SK-N-SH (cell line): ENCODE measurements at regions of chr7 and their contacts with region 1.

Region 1: GRCh38 chr7:80428161-80429054 is 83.5 kb downstream of the GNAT3 start:
- DNase-seq: peak; percentile 37
- H3K4me3 ChIP-seq: no peak overlapping the region
- H3K27ac ChIP-seq: peak overlapping the region in 1 of 2 experiments; percentile 38; a peak in 1 of 4 replicates
- H3K4me1 ChIP-seq: no peaks in the 10 kb centered on the region
- H3K27me3 ChIP-seq: no peaks in the 10 kb centered on the region
- CTCF ChIP-seq: peak; percentile 85
- EP300 ChIP-seq: no peak
- RAD21 ChIP-seq: peak; percentile 93

Region 2: DNA sequence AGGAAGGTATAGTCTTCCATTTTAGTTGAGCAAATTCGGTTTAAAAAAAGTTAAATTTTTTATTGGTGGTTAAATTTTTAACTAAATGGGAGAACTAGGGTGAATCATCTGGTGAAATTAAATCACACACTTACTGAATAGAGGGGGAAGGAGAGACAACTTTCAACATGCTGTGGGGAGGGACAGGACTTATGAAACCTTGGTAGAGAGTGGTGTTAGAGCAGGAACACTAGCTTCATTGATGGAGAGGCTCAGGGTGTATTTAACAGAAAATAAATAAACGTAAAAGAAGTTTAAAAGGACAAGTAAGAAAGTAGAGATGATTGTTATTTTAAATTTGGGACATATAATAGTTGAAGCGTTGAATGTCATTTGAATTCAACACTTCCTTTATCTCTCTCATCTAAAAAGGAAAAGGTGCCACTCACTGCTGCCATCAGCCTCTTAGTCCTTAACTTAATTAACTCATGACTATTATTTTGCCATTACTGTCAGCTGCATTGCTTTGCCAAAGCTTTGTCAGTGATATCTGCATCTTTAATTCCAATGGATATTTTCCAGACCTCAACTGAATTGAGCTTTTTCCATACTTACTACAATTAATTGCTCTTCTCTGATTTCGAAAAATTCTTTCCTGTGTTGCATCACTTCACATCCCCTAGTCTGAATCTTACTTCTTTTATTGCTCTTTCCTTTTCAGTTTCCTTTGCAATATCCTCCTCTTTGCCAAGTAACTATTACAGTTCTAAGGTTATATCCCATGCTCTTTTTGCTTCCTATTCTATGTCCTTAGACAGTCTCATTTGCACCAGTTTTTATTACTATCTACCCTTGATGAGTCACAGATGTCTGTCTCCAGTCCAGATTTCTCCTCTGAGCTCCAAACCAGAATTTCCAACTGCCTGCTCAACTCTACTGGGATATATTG is 11.8 kb after region 1 on chr7:
- CTCF ChIA-PET with region 1: interaction called, 66 read pairs
- POLR2A ChIA-PET with region 1: no interaction called
- DNase-seq: peak; percentile 59
- H3K4me3 ChIP-seq: no peak overlapping the region; a peak in 1 of 4 replicates
- H3K27ac ChIP-seq: peak overlapping the region; percentile 86 to 96; a peak in 3 of 4 replicates
- H3K4me1 ChIP-seq: peaks cover 21 to 29% of the 10 kb centered on the region in 2 experiments
- H3K27me3 ChIP-seq: no peaks in the 10 kb centered on the region
- CTCF ChIP-seq: no peak
- EP300 ChIP-seq: peak; percentile 96 to 98
- RAD21 ChIP-seq: no peak

Region 3: DNA sequence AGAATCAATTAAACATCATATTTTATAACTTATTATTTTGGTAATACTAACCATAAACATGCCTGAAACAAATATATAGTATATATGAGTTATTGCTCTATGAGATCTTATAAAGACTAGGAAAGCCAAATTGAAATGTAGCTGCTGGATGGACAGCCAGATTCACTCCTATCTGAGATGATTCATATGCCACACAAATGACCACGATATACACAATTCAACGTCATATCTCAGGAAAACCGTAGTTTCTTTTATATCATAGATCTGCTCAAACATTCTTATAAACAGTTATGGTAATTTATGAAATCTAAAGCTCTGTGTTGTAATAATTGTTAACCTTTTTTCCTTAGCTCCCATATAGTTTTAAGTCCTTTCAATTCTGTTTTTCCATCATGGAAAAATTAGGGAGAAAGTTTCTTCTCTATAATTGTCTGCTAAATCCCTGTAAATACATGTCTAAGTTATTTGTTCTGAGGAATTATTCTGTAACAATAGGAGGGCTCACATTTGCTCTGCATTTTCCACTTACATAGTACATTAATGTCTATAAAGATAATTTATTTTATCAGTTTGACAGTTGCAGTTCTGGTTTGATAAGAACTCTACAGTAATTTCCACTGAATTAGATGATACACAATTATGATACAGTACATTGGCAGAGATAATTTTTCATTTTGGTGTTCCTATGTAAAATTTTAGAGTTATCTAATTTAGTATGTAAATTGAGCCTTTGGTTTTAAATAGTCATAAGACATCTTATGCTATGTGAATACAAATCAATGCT is 40.7 kb after region 1 on chr7:
- CTCF ChIA-PET with region 1: interaction called, 14 read pairs
- POLR2A ChIA-PET with region 1: no interaction called
- DNase-seq: no peak
- H3K4me3 ChIP-seq: no peak overlapping the region
- H3K27ac ChIP-seq: no peak overlapping the region
- H3K4me1 ChIP-seq: peaks cover 10 to 14% of the 10 kb centered on the region in 2 experiments; a peak in 1 of 4 replicates
- H3K27me3 ChIP-seq: no peaks in the 10 kb centered on the region
- CTCF ChIP-seq: no peak
- EP300 ChIP-seq: peak in 1 of 2 experiments; percentile 89; a peak in 2 of 4 replicates
- RAD21 ChIP-seq: no peak

Region 4: GRCh38 chr7:80666376-80666775 is 238.0 kb after region 1 on chr7:
- CTCF ChIA-PET with region 1: interaction called, 23 read pairs
- POLR2A ChIA-PET with region 1: no interaction called
- DNase-seq: no peak
- H3K4me3 ChIP-seq: no peak overlapping the region
- H3K27ac ChIP-seq: no peak overlapping the region
- H3K4me1 ChIP-seq: no peaks in the 10 kb centered on the region
- H3K27me3 ChIP-seq: no peaks in the 10 kb centered on the region
- CTCF ChIP-seq: no peak
- EP300 ChIP-seq: no peak
- RAD21 ChIP-seq: no peak